ENCODE measurements at regions of chr12 and their contacts with region 1.

Region 1: GRCh38 chr12:79344855-79345847 is 345.6 kb downstream of the PAWR start:
- DNase-seq: peak; percentile 54
- H3K4me3 ChIP-seq: no peak overlapping the region
- H3K27ac ChIP-seq: no peak overlapping the region
- H3K4me1 ChIP-seq: no peaks in the 10 kb centered on the region
- H3K27me3 ChIP-seq: peaks cover 0 to 2% of the 10 kb centered on the region in 2 experiments
- CTCF ChIP-seq: peak; percentile 35 to 51
- POLR2A ChIP-seq: no peak

Region 2: GRCh38 chr12:78562368-78563205 is 782.6 kb before region 1 on chr12:
- CTCF ChIA-PET with region 1: interaction called, 20 read pairs
- POLR2A ChIA-PET with region 1: no interaction called
- dilution Hi-C with region 1: no loop called
- intact Hi-C with region 1: loop called (anchors 5 kb)
- DNase-seq: peak; percentile 46
- H3K4me3 ChIP-seq: no peak overlapping the region
- H3K27ac ChIP-seq: no peak overlapping the region
- H3K4me1 ChIP-seq: no peaks in the 10 kb centered on the region
- H3K27me3 ChIP-seq: peaks cover 5% of the 10 kb centered on the region in 2 experiments
- CTCF ChIP-seq: peak in 1 of 2 donors; percentile 32
- POLR2A ChIP-seq: no peak

Region 3: DNA sequence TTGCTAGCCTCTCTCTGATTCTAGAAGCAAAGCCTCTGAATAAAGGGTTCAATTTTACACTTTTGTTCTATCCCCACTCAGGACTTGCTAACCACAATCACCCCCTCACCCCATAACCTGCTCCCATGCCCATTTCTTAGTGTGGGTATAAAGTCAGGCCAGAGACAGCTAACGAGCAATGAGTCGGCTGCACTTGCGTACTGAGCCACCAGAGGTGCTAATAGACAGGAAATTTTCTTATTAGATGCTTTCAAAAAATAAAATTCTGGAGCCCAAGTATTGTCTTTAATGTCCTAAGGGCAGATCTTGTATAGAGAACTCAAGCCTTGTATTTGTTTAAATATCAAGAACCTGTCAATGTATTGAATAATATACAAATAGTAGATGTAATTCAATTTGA is 223.7 kb before region 1 on chr12:
- CTCF ChIA-PET with region 1: interaction called, 5 read pairs
- POLR2A ChIA-PET with region 1: no interaction called
- dilution Hi-C with region 1: no loop called
- intact Hi-C with region 1: loop called (anchors 5 kb)
- DNase-seq: peak; percentile 3
- H3K4me3 ChIP-seq: no peak overlapping the region
- H3K27ac ChIP-seq: no peak overlapping the region
- H3K4me1 ChIP-seq: no peaks in the 10 kb centered on the region
- H3K27me3 ChIP-seq: no peaks in the 10 kb centered on the region
- CTCF ChIP-seq: peak; percentile 27 to 32
- POLR2A ChIP-seq: no peak

Region 4: GRCh38 chr12:79402606-79403005 is 57.5 kb after region 1 on chr12:
- CTCF ChIA-PET with region 1: no interaction called
- POLR2A ChIA-PET with region 1: no interaction called
- dilution Hi-C with region 1: no loop called
- intact Hi-C with region 1: no loop called
- DNase-seq: no peak
- H3K4me3 ChIP-seq: no peak overlapping the region
- H3K27ac ChIP-seq: no peak overlapping the region
- H3K4me1 ChIP-seq: peaks cover 5% of the 10 kb centered on the region
- H3K27me3 ChIP-seq: no peaks in the 10 kb centered on the region
- CTCF ChIP-seq: no peak
- POLR2A ChIP-seq: no peak

Region 5: GRCh38 chr12:79522257-79522988 is 177.3 kb after region 1 on chr12:
- CTCF ChIA-PET with region 1: no interaction called
- POLR2A ChIA-PET with region 1: no interaction called
- dilution Hi-C with region 1: no loop called
- intact Hi-C with region 1: no loop called
- DNase-seq: peak; percentile 82
- H3K4me3 ChIP-seq: peak overlapping the region in 1 of 3 experiments; percentile 37
- H3K27ac ChIP-seq: peak overlapping the region; percentile 62
- H3K4me1 ChIP-seq: peaks cover 32% of the 10 kb centered on the region
- H3K27me3 ChIP-seq: no peaks in the 10 kb centered on the region
- CTCF ChIP-seq: no peak
- POLR2A ChIP-seq: no peak